B cell (primary cell): ENCODE measurements at regions of chr14 and their contacts with region 1.

Region 1: GRCh38 chr14:65287264-65288131 is 125.0 kb upstream of the FUT8 start:
- DNase-seq: peak; percentile 75
- ATAC-seq: peak; percentile 59
- H3K4me3 ChIP-seq: peak overlapping the region in 3 of 5 experiments; percentile 3 to 38 (median 16)
- H3K4me3 Mint-ChIP-seq: peak overlapping the region; percentile 70
- H3K27ac ChIP-seq: peak overlapping the region; percentile 89 to 95
- H3K27ac Mint-ChIP-seq: peak overlapping the region; percentile 95
- H3K4me1 ChIP-seq: peaks cover 75 to 87% of the 10 kb centered on the region in 2 donors
- H3K4me1 Mint-ChIP-seq: peaks cover 81% of the 10 kb centered on the region
- H3K27me3 ChIP-seq: no peaks in the 10 kb centered on the region
- H3K27me3 Mint-ChIP-seq: no peaks in the 10 kb centered on the region
- CTCF ChIP-seq: no peak

Region 2: GRCh38 chr14:65170768-65171507 is 116.6 kb before region 1 on chr14:
- CTCF ChIA-PET with region 1: interaction called, 16 read pairs
- POLR2A ChIA-PET with region 1: interaction called, 4 read pairs
- intact Hi-C with region 1: no loop called
- DNase-seq: peak; percentile 72
- ATAC-seq: peak; percentile 50
- H3K4me3 ChIP-seq: peak overlapping the region; percentile 42 to 74 (median 64)
- H3K4me3 Mint-ChIP-seq: peak overlapping the region; percentile 86
- H3K27ac ChIP-seq: peak overlapping the region in 1 of 2 donors; percentile 23
- H3K27ac Mint-ChIP-seq: peak overlapping the region; percentile 88
- H3K4me1 ChIP-seq: peaks cover 14 to 35% of the 10 kb centered on the region in 2 donors
- H3K4me1 Mint-ChIP-seq: peaks cover 55% of the 10 kb centered on the region
- H3K27me3 ChIP-seq: no peaks in the 10 kb centered on the region
- H3K27me3 Mint-ChIP-seq: no peaks in the 10 kb centered on the region
- CTCF ChIP-seq: peak; percentile 40

Region 3: GRCh38 chr14:65250162-65250495 is 37.4 kb before region 1 on chr14:
- CTCF ChIA-PET with region 1: no interaction called
- POLR2A ChIA-PET with region 1: no interaction called
- intact Hi-C with region 1: no loop called
- DNase-seq: no peak
- ATAC-seq: no peak
- H3K4me3 ChIP-seq: no peak overlapping the region
- H3K4me3 Mint-ChIP-seq: no peak overlapping the region
- H3K27ac ChIP-seq: no peak overlapping the region
- H3K27ac Mint-ChIP-seq: no peak overlapping the region
- H3K4me1 ChIP-seq: no peaks in the 10 kb centered on the region
- H3K4me1 Mint-ChIP-seq: peaks cover 9% of the 10 kb centered on the region
- H3K27me3 ChIP-seq: no peaks in the 10 kb centered on the region
- H3K27me3 Mint-ChIP-seq: no peaks in the 10 kb centered on the region
- CTCF ChIP-seq: no peak

Region 4: GRCh38 chr14:65302571-65303189 is 15.2 kb after region 1 on chr14:
- CTCF ChIA-PET with region 1: interaction called, 33 read pairs
- POLR2A ChIA-PET with region 1: interaction called, 8 read pairs
- intact Hi-C with region 1: loop called (anchors 2 kb)
- DNase-seq: peak; percentile 44
- ATAC-seq: peak; percentile 8
- H3K4me3 ChIP-seq: no peak overlapping the region
- H3K4me3 Mint-ChIP-seq: peak overlapping the region; percentile 56
- H3K27ac ChIP-seq: peak overlapping the region; percentile 71 to 80
- H3K27ac Mint-ChIP-seq: peak overlapping the region; percentile 98
- H3K4me1 ChIP-seq: peaks cover 54 to 87% of the 10 kb centered on the region in 2 donors
- H3K4me1 Mint-ChIP-seq: peaks cover 75% of the 10 kb centered on the region
- H3K27me3 ChIP-seq: no peaks in the 10 kb centered on the region
- H3K27me3 Mint-ChIP-seq: no peaks in the 10 kb centered on the region
- CTCF ChIP-seq: no peak

Region 5: GRCh38 chr14:65336191-65336591 is 48.7 kb after region 1 on chr14:
- CTCF ChIA-PET with region 1: interaction called, 16 read pairs
- POLR2A ChIA-PET with region 1: no interaction called
- intact Hi-C with region 1: no loop called
- DNase-seq: no peak
- ATAC-seq: peak; percentile 37
- H3K4me3 ChIP-seq: no peak overlapping the region
- H3K4me3 Mint-ChIP-seq: peak overlapping the region; percentile 7
- H3K27ac ChIP-seq: no peak overlapping the region
- H3K27ac Mint-ChIP-seq: peak overlapping the region; percentile 72
- H3K4me1 ChIP-seq: peaks cover 39 to 57% of the 10 kb centered on the region in 2 donors
- H3K4me1 Mint-ChIP-seq: peaks cover 52% of the 10 kb centered on the region
- H3K27me3 ChIP-seq: no peaks in the 10 kb centered on the region
- H3K27me3 Mint-ChIP-seq: no peaks in the 10 kb centered on the region
- CTCF ChIP-seq: no peak

Region 6: GRCh38 chr14:65361920-65362319 is 74.4 kb after region 1 on chr14:
- CTCF ChIA-PET with region 1: interaction called, 11 read pairs
- POLR2A ChIA-PET with region 1: no interaction called
- intact Hi-C with region 1: no loop called
- DNase-seq: no peak
- ATAC-seq: no peak
- H3K4me3 ChIP-seq: no peak overlapping the region
- H3K4me3 Mint-ChIP-seq: no peak overlapping the region
- H3K27ac ChIP-seq: no peak overlapping the region
- H3K27ac Mint-ChIP-seq: no peak overlapping the region
- H3K4me1 ChIP-seq: peaks cover 27 to 35% of the 10 kb centered on the region in 2 donors
- H3K4me1 Mint-ChIP-seq: peaks cover 39% of the 10 kb centered on the region
- H3K27me3 ChIP-seq: no peaks in the 10 kb centered on the region
- H3K27me3 Mint-ChIP-seq: no peaks in the 10 kb centered on the region
- CTCF ChIP-seq: no peak